ENCODE measurements at regions of chr11 and their contacts with region 1.

Region 1: GRCh38 chr11:72683782-72684200 is 9.6 kb upstream of the PDE2A start:
- DNase-seq: peak; percentile 81
- H3K4me3 Mint-ChIP-seq: no peak overlapping the region
- H3K27ac Mint-ChIP-seq: no peak overlapping the region
- H3K4me1 Mint-ChIP-seq: peaks cover 13% of the 10 kb centered on the region
- H3K27me3 Mint-ChIP-seq: no peaks in the 10 kb centered on the region

Region 2: GRCh38 chr11:72058416-72059034 is 625.3 kb before region 1 on chr11:
- CTCF ChIA-PET with region 1: no interaction called
- intact Hi-C with region 1: no loop called
- DNase-seq: no peak
- H3K4me3 Mint-ChIP-seq: no peak overlapping the region
- H3K27ac Mint-ChIP-seq: no peak overlapping the region
- H3K4me1 Mint-ChIP-seq: peaks cover 8% of the 10 kb centered on the region
- H3K27me3 Mint-ChIP-seq: no peaks in the 10 kb centered on the region

Region 3: DNA sequence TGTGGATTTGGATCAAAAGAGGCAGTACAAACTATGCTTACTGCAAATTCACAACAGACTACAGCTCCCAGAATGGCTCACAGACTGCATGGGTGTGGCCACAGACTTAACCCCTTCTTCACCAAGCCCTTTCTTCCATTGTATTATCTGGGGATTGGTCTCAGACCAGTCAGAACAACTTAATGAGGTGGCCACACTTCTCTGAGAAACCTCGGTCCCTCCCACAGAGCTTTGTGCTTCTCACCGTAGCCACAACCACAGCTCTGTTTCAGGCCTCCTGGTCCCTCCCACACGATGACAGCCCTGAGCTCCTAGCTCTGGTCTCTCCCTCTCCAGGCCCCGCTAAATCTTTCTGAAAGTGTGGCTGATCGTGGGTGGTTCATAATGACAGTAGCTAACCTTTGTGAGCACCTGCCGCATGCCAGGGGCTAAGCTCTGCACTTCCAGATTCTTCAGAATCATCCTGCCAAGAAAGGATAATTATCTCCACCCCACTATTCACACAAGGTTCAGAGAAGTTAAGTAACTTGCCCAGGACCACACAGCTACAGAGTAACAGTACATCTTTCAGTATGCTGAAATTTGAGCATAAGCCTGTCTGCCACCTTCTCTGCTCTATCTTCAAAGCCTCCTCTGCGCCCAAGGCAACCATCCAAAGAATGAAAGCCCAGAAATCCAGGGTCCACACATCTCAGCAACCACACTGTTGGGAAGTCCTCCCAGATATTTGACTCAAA is 15.0 kb before region 1 on chr11:
- CTCF ChIA-PET with region 1: interaction called, 18 read pairs
- intact Hi-C with region 1: no loop called
- DNase-seq: peak; percentile 35
- H3K4me3 Mint-ChIP-seq: no peak overlapping the region
- H3K27ac Mint-ChIP-seq: no peak overlapping the region
- H3K4me1 Mint-ChIP-seq: no peaks in the 10 kb centered on the region
- H3K27me3 Mint-ChIP-seq: peaks cover 54% of the 10 kb centered on the region

Region 4: GRCh38 chr11:73429121-73429750 is 745.4 kb after region 1 on chr11:
- CTCF ChIA-PET with region 1: no interaction called
- intact Hi-C with region 1: no loop called
- DNase-seq: no peak
- H3K4me3 Mint-ChIP-seq: no peak overlapping the region
- H3K27ac Mint-ChIP-seq: no peak overlapping the region
- H3K4me1 Mint-ChIP-seq: peaks cover 9% of the 10 kb centered on the region
- H3K27me3 Mint-ChIP-seq: no peaks in the 10 kb centered on the region

Measured in activated naive CD4-positive, alpha-beta T cell treated with anti-CD3 and anti-CD28 coated beads for 36 hours (primary cell).